MCF 10A (cell line): ENCODE measurements at regions of chr1 and their contacts with region 1.

Region 1: GRCh38 chr1:114979278-114979891 is 50.2 kb upstream of the TSHB start:
- DNase-seq: peak; percentile 71
- H3K4me3 Mint-ChIP-seq: no peak overlapping the region
- H3K27ac Mint-ChIP-seq: no peak overlapping the region
- H3K4me1 Mint-ChIP-seq: no peaks in the 10 kb centered on the region
- H3K27me3 Mint-ChIP-seq: peaks cover 64% of the 10 kb centered on the region
- CTCF ChIP-seq: peak; percentile 66

Region 2: GRCh38 chr1:115041654-115042053 is 62.3 kb after region 1 on chr1:
- CTCF ChIA-PET with region 1: interaction called, 26 read pairs
- POLR2A ChIA-PET with region 1: interaction called, 5 read pairs
- intact Hi-C with region 1: loop called (anchors 1 kb)
- DNase-seq: peak; percentile 51
- H3K4me3 Mint-ChIP-seq: no peak overlapping the region
- H3K27ac Mint-ChIP-seq: no peak overlapping the region
- H3K4me1 Mint-ChIP-seq: no peaks in the 10 kb centered on the region
- H3K27me3 Mint-ChIP-seq: peaks cover 28% of the 10 kb centered on the region
- CTCF ChIP-seq: peak; percentile 39